Breast epithelium (tissue), 4 donors: ENCODE measurements at regions of chr12 and their contacts with region 1.

Region 1: DNA sequence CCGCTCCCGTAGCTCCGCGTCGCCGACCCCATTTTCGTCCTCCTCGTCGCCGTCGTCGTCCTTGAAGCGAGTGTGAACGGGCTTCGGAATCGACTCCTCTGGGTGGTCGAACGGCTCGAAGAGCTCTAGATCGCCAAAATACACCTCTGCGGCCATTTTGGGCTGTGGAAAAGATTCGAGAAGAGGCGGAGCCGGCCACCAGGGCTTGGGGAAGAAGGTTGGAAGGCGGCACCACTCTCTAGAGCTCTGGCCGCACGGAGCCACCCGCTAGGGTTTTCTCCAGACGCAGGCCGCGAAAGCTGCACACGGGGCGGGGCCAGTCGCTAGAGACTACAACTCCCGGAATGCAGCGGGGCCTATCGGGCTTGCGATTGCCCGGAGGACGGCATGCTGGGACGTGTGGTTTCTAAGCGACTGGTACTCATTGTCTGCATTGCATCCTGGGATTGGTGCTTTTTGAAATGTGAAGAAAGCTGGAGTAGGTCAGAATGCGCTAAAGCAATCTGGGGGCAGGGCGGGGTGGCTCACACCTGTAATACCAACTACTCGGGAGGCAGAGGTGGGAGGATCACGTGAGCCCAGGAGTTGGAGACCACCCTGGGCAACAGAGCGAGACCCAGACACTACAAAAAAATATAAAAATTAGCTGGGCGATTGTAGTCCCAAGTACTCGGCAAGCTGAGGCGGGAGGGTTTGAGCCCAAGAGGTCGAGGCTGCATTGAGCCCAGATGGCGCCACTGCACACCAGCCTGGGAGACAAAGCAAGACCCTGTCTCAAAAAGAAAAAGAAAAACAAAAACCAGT is at the start of gene ZCCHC8:
- DNase-seq: peak; percentile 95 to 96
- H3K4me3 ChIP-seq: peak within 1 kb of the TSS; percentile 89 to 97 (median 95)
- H3K27ac ChIP-seq: peak within 1 kb of the TSS; percentile 98 to 100
- H3K4me1 ChIP-seq: peaks cover 0 to 13% of the 10 kb centered on the region in 2 donors
- H3K27me3 ChIP-seq: no peaks in the 10 kb centered on the region
- CTCF ChIP-seq: peak; percentile 21 to 50 (median 50)
- POLR2A ChIP-seq: peak; percentile 92
- total RNA-seq, gene ZCCHC8: 16.8 to 42.0 (median 30.8) TPM

Region 2: GRCh38 chr12:121467115-121467793 is 1033.6 kb before region 1 on chr12:
- intact Hi-C with region 1: loop called (anchors 5 kb)
- DNase-seq: peak; percentile 84 to 87
- H3K4me3 ChIP-seq: peak overlapping the region; percentile 52 to 96 (median 69)
- H3K27ac ChIP-seq: peak overlapping the region; percentile 80 to 93
- H3K4me1 ChIP-seq: no peaks in the 10 kb centered on the region
- H3K27me3 ChIP-seq: no peaks in the 10 kb centered on the region
- CTCF ChIP-seq: no peak
- POLR2A ChIP-seq: no peak

Region 3: GRCh38 chr12:122399592-122400373 is 101.1 kb before region 1 on chr12:
- intact Hi-C with region 1: loop called (anchors 10 kb)
- DNase-seq: peak; percentile 64 to 91
- H3K4me3 ChIP-seq: peak overlapping the region in 2 of 3 donors; percentile 11 to 36
- H3K27ac ChIP-seq: peak overlapping the region; percentile 89 to 97
- H3K4me1 ChIP-seq: peaks cover 0 to 18% of the 10 kb centered on the region in 2 donors
- H3K27me3 ChIP-seq: no peaks in the 10 kb centered on the region
- CTCF ChIP-seq: peak; percentile 40 to 91 (median 78)
- POLR2A ChIP-seq: no peak